Lower leg skin (tissue), 4 donors: ENCODE measurements at regions of chr13 and their contacts with region 1.

Region 1: GRCh38 chr13:25372284-25373081 is 709 bp downstream of the ATP8A2 start:
- DNase-seq: no peak
- H3K4me3 ChIP-seq: no peak overlapping the region
- CTCF ChIP-seq: no peak
- POLR2A ChIP-seq: no peak

Region 2: GRCh38 chr13:25085125-25085742 is 287.2 kb before region 1 on chr13:
- intact Hi-C with region 1: loop called (anchors 5 kb)
- DNase-seq: no peak
- H3K4me3 ChIP-seq: no peak overlapping the region
- CTCF ChIP-seq: no peak
- POLR2A ChIP-seq: no peak

Region 3: DNA sequence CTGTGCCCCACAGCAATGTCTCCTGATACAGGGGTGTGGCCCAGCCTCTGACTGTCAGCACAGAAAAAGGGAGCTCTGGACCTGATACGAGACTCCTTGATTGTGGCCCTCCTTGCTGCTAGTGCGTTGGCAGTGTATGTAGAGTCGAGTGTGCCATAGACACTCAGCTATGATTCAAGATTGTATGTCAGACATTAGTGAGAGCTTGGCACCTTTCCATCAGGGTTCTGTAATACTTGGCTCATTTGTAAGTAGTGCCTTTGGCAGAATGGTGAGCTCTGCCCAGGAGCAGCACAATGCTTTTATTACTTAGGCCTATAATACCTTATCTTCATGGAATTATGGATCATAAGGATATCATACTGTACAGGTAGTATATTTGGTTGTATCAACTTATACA is 82.7 kb after region 1 on chr13:
- intact Hi-C with region 1: no loop called
- DNase-seq: no peak
- H3K4me3 ChIP-seq: no peak overlapping the region
- CTCF ChIP-seq: no peak
- POLR2A ChIP-seq: no peak